ENCODE measurements at regions of chr9 and their contacts with region 1.

Region 1: GRCh38 chr9:71819115-71819739 is 50.9 kb upstream of the CEMIP2 start:
- DNase-seq: no peak
- H3K4me3 ChIP-seq: no peak overlapping the region
- H3K27ac ChIP-seq: no peak overlapping the region
- H3K4me1 ChIP-seq: no peaks in the 10 kb centered on the region
- H3K27me3 ChIP-seq: no peaks in the 10 kb centered on the region
- CTCF ChIP-seq: peak; percentile 56 to 76 (median 69)
- EP300 ChIP-seq: no peak
- POLR2A ChIP-seq: no peak

Region 2: GRCh38 chr9:71285191-71285656 is 534.0 kb before region 1 on chr9:
- intact Hi-C with region 1: loop called (anchors 5 kb)
- DNase-seq: no peak
- H3K4me3 ChIP-seq: no peak overlapping the region
- H3K27ac ChIP-seq: no peak overlapping the region
- H3K4me1 ChIP-seq: no peaks in the 10 kb centered on the region
- H3K27me3 ChIP-seq: no peaks in the 10 kb centered on the region
- CTCF ChIP-seq: peak; percentile 59 to 83 (median 74)
- EP300 ChIP-seq: no peak
- POLR2A ChIP-seq: no peak

Region 3: GRCh38 chr9:71737455-71737854 is 81.8 kb before region 1 on chr9:
- intact Hi-C with region 1: no loop called
- DNase-seq: no peak
- H3K4me3 ChIP-seq: no peak overlapping the region
- H3K27ac ChIP-seq: no peak overlapping the region
- H3K4me1 ChIP-seq: no peaks in the 10 kb centered on the region
- H3K27me3 ChIP-seq: no peaks in the 10 kb centered on the region
- CTCF ChIP-seq: no peak
- EP300 ChIP-seq: no peak
- POLR2A ChIP-seq: no peak

Region 4: GRCh38 chr9:71891557-71892189 is 72.4 kb after region 1 on chr9:
- intact Hi-C with region 1: loop called (anchors 5 kb)
- DNase-seq: no peak
- H3K4me3 ChIP-seq: no peak overlapping the region
- H3K27ac ChIP-seq: no peak overlapping the region
- H3K4me1 ChIP-seq: peaks cover 0 to 40% (median 26%) of the 10 kb centered on the region in 4 donors
- H3K27me3 ChIP-seq: no peaks in the 10 kb centered on the region
- CTCF ChIP-seq: no peak
- EP300 ChIP-seq: no peak
- POLR2A ChIP-seq: no peak